ENCODE measurements at regions of chr1 and their contacts with region 1.

Region 1: GRCh38 chr1:93846211-93846991 is 32.6 kb downstream of the DNTTIP2 start:
- DNase-seq: peak; percentile 74 to 95 (median 84)
- ATAC-seq: peak; percentile 46
- H3K4me3 ChIP-seq: peak overlapping the region; percentile 95
- H3K4me3 Mint-ChIP-seq: peak overlapping the region; percentile 89
- H3K27ac ChIP-seq: peak overlapping the region; percentile 79 to 87
- H3K27ac Mint-ChIP-seq: peak overlapping the region; percentile 100
- H3K4me1 ChIP-seq: peaks cover 23% of the 10 kb centered on the region
- H3K4me1 Mint-ChIP-seq: peaks cover 37% of the 10 kb centered on the region
- H3K27me3 ChIP-seq: no peaks in the 10 kb centered on the region
- H3K27me3 Mint-ChIP-seq: peaks cover 7% of the 10 kb centered on the region
- CTCF ChIP-seq: no peak

Region 2: GRCh38 chr1:93021539-93022134 is 824.8 kb before region 1 on chr1:
- CTCF ChIA-PET with region 1: no interaction called
- POLR2A ChIA-PET with region 1: no interaction called
- intact Hi-C with region 1: loop called in 1 of 2 experiments (anchors 2 kb)
- DNase-seq: peak in 3 of 14 experiments; percentile 68 to 71 (median 69)
- ATAC-seq: peak; percentile 85
- H3K4me3 ChIP-seq: no peak overlapping the region
- H3K4me3 Mint-ChIP-seq: no peak overlapping the region
- H3K27ac ChIP-seq: no peak overlapping the region
- H3K27ac Mint-ChIP-seq: no peak overlapping the region
- H3K4me1 ChIP-seq: no peaks in the 10 kb centered on the region
- H3K4me1 Mint-ChIP-seq: peaks cover 5% of the 10 kb centered on the region
- H3K27me3 ChIP-seq: no peaks in the 10 kb centered on the region
- H3K27me3 Mint-ChIP-seq: peaks cover 3% of the 10 kb centered on the region
- CTCF ChIP-seq: peak; percentile 90

Region 3: GRCh38 chr1:93275634-93276295 is 570.6 kb before region 1 on chr1:
- CTCF ChIA-PET with region 1: no interaction called
- POLR2A ChIA-PET with region 1: no interaction called
- intact Hi-C with region 1: no loop called
- DNase-seq: no peak
- ATAC-seq: no peak
- H3K4me3 ChIP-seq: no peak overlapping the region
- H3K4me3 Mint-ChIP-seq: no peak overlapping the region
- H3K27ac ChIP-seq: no peak overlapping the region
- H3K27ac Mint-ChIP-seq: no peak overlapping the region
- H3K4me1 ChIP-seq: no peaks in the 10 kb centered on the region
- H3K4me1 Mint-ChIP-seq: no peaks in the 10 kb centered on the region
- H3K27me3 ChIP-seq: no peaks in the 10 kb centered on the region
- H3K27me3 Mint-ChIP-seq: no peaks in the 10 kb centered on the region
- CTCF ChIP-seq: no peak

Region 4: DNA sequence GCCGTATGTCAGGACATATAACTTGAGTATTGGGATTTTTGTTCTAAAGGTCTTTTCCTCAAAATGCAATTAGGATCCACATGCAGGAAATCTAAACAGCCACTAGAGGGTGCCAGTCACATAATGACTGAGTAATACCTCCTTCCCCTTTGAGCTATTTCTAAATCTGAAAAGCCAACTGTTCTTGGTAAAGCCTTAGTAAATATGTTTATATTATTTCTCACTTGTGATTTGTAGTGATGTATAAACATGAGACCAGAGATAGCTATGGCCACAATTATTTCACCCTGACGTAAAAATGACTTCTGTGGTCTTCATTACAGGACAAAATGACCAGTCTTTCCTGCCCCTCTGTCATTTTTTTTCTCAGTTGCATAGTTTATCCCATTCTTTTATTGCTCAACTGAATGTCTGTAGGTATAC is 541.7 kb before region 1 on chr1:
- CTCF ChIA-PET with region 1: interaction called, 4 read pairs
- POLR2A ChIA-PET with region 1: interaction called, 3 read pairs
- intact Hi-C with region 1: loop called (anchors 2 to 10 kb)
- DNase-seq: peak in 12 of 14 experiments; percentile 5 to 80 (median 34)
- ATAC-seq: peak; percentile 73
- H3K4me3 ChIP-seq: no peak overlapping the region
- H3K4me3 Mint-ChIP-seq: no peak overlapping the region
- H3K27ac ChIP-seq: no peak overlapping the region
- H3K27ac Mint-ChIP-seq: no peak overlapping the region
- H3K4me1 ChIP-seq: no peaks in the 10 kb centered on the region
- H3K4me1 Mint-ChIP-seq: no peaks in the 10 kb centered on the region
- H3K27me3 ChIP-seq: no peaks in the 10 kb centered on the region
- H3K27me3 Mint-ChIP-seq: no peaks in the 10 kb centered on the region
- CTCF ChIP-seq: peak; percentile 92

Region 5: GRCh38 chr1:93447516-93448291 is 398.7 kb before region 1 on chr1 and contains the start of gene FNBP1L:
- CTCF ChIA-PET with region 1: interaction called, 4 read pairs
- POLR2A ChIA-PET with region 1: interaction called, 21 read pairs
- intact Hi-C with region 1: loop called (anchors 5 to 10 kb)
- DNase-seq: peak; percentile 20 to 79 (median 54)
- ATAC-seq: peak; percentile 82
- H3K4me3 ChIP-seq: peak within 1 kb of the TSS; percentile 65
- H3K4me3 Mint-ChIP-seq: peak within 1 kb of the TSS; percentile 97
- H3K27ac ChIP-seq: no peak within 1 kb of the TSS
- H3K27ac Mint-ChIP-seq: peak within 1 kb of the TSS; percentile 59
- H3K4me1 ChIP-seq: peaks cover 20% of the 10 kb centered on the region
- H3K4me1 Mint-ChIP-seq: peaks cover 27% of the 10 kb centered on the region
- H3K27me3 ChIP-seq: peaks cover 16 to 37% of the 10 kb centered on the region in 2 experiments
- H3K27me3 Mint-ChIP-seq: peaks cover 42% of the 10 kb centered on the region
- CTCF ChIP-seq: no peak
- total RNA-seq, gene FNBP1L: 1.1 TPM

Region 6: GRCh38 chr1:93552741-93553455 is 293.5 kb before region 1 on chr1:
- CTCF ChIA-PET with region 1: no interaction called
- POLR2A ChIA-PET with region 1: no interaction called
- intact Hi-C with region 1: no loop called
- DNase-seq: no peak
- ATAC-seq: no peak
- H3K4me3 ChIP-seq: no peak overlapping the region
- H3K4me3 Mint-ChIP-seq: no peak overlapping the region
- H3K27ac ChIP-seq: no peak overlapping the region
- H3K27ac Mint-ChIP-seq: no peak overlapping the region
- H3K4me1 ChIP-seq: no peaks in the 10 kb centered on the region
- H3K4me1 Mint-ChIP-seq: peaks cover 25% of the 10 kb centered on the region
- H3K27me3 ChIP-seq: no peaks in the 10 kb centered on the region
- H3K27me3 Mint-ChIP-seq: no peaks in the 10 kb centered on the region
- CTCF ChIP-seq: no peak

Region 7: DNA sequence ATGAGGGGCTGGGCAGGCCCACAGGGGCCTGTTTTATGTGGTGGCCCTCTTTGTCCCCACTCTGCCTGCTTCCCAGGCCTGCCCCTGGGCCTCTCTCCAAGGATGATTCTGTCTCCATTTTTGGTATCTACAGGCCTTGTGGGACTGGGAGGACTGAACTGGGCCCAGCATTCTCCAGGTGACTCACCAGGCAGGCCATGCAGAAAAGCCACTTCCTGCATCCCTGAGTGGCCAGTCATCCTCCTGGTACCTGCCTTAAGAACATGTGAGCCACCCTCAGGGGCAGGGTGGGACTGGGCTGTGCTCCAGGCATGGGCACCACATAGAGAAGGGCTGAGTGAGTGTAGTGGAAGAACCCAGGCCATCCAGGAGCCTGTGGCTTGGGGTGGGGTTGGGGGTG is 144.8 kb before region 1 on chr1:
- CTCF ChIA-PET with region 1: no interaction called
- POLR2A ChIA-PET with region 1: no interaction called
- intact Hi-C with region 1: no loop called
- DNase-seq: no peak
- ATAC-seq: no peak
- H3K4me3 ChIP-seq: no peak overlapping the region
- H3K4me3 Mint-ChIP-seq: no peak overlapping the region
- H3K27ac ChIP-seq: no peak overlapping the region
- H3K27ac Mint-ChIP-seq: no peak overlapping the region
- H3K4me1 ChIP-seq: no peaks in the 10 kb centered on the region
- H3K4me1 Mint-ChIP-seq: no peaks in the 10 kb centered on the region
- H3K27me3 ChIP-seq: no peaks in the 10 kb centered on the region
- H3K27me3 Mint-ChIP-seq: no peaks in the 10 kb centered on the region
- CTCF ChIP-seq: no peak

Region 8: DNA sequence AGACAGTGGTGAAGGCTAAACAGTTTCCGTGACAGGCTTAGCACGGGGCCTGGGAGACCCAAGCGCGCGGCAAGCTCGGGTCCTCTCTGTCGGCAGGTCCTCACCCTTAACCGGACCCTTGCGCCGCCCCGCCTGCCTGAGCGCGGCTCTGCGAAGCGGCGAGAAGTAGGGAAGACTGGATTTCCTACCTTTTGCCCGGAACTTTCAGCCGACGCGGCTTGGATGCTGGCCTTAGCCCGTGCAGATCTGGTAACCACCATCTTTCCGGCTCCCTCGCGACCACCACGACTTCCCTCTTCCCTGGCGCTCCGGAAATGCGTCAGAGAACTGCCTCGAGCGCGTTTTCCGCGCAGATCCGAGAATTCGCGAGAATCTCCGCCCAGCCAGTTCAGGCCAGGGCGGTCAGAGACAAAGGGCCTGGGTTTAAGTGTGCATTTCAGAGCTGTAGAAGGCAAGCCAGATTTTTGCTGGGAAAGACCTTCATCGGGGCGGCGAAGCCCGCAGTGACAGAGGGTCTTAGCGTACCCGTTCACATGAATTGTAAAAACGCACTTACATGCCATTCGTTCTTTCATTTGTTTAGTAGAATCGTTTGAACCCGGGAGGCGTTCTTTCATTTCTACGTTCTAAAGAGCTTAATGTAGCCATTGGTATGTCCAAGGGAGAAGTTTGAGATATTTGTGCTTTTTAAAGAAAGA is 32.6 kb after region 1 on chr1 and contains the start of gene DNTTIP2:
- CTCF ChIA-PET with region 1: interaction called, 7 read pairs
- POLR2A ChIA-PET with region 1: interaction called, 70 read pairs
- intact Hi-C with region 1: loop called (anchors 1 to 5 kb)
- DNase-seq: peak; percentile 78 to 93 (median 82)
- ATAC-seq: peak; percentile 82
- H3K4me3 ChIP-seq: peak within 1 kb of the TSS; percentile 91
- H3K4me3 Mint-ChIP-seq: peak within 1 kb of the TSS; percentile 100
- H3K27ac ChIP-seq: peak within 1 kb of the TSS; percentile 85 to 94
- H3K27ac Mint-ChIP-seq: peak within 1 kb of the TSS; percentile 98
- H3K4me1 ChIP-seq: peaks cover 26% of the 10 kb centered on the region
- H3K4me1 Mint-ChIP-seq: peaks cover 45% of the 10 kb centered on the region
- H3K27me3 ChIP-seq: no peaks in the 10 kb centered on the region
- H3K27me3 Mint-ChIP-seq: no peaks in the 10 kb centered on the region
- CTCF ChIP-seq: no peak
- total RNA-seq, gene DNTTIP2: 110 to 120 TPM

Region 9: DNA sequence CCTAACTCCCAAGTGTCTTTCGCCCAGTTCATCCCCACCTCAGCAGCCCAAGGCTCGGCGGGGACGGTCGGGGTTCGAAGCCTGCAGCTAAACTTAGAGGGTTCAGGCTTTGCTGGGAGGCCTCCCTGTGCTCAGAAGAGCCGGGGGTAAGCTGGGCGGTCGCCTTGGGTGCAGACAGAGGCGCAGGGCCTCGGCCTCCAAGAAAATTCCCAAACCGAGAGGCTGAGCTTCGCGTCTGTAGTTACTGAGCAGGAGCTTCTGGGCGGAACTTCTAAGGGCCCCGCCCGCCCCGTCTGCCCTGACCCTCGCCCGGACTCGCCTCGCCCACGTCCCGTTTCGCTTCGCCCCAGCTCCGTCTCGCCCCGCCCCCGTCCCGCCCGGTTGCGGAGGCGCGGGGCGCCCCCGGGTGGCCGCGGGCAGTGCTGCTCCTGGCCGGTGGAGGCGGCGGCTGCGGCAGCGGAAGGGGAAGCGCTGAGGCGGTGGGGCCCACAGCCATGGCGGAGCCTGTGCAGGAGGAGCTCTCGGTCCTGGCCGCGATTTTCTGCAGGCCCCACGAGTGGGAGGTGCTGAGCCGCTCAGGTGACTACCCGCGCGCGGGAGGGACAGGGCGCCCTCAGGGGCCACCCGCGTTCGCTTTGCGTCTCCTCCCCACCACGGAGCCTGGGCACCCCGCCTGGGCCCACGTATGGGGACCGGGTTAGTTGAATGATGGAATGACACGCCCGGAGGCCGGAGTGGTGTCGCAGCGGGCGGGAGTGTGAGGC is 1387.5 kb after region 1 on chr1 and contains the start of gene RWDD3:
- CTCF ChIA-PET with region 1: no interaction called
- POLR2A ChIA-PET with region 1: interaction called, 7 read pairs
- intact Hi-C with region 1: loop called in 1 of 2 experiments (anchors 10 kb)
- DNase-seq: peak; percentile 82 to 97 (median 93)
- ATAC-seq: peak; percentile 94
- H3K4me3 ChIP-seq: peak within 1 kb of the TSS; percentile 85
- H3K4me3 Mint-ChIP-seq: peak within 1 kb of the TSS; percentile 95
- H3K27ac ChIP-seq: peak within 1 kb of the TSS; percentile 33 to 53
- H3K27ac Mint-ChIP-seq: peak within 1 kb of the TSS; percentile 86
- H3K4me1 ChIP-seq: peaks cover 22% of the 10 kb centered on the region
- H3K4me1 Mint-ChIP-seq: peaks cover 51% of the 10 kb centered on the region
- H3K27me3 ChIP-seq: no peaks in the 10 kb centered on the region
- H3K27me3 Mint-ChIP-seq: peaks cover 22% of the 10 kb centered on the region
- CTCF ChIP-seq: peak; percentile 78
- total RNA-seq, gene RWDD3: 14.3 to 14.5 TPM

Measured in CD4-positive, alpha-beta T cell (primary cell).